CD8-positive, alpha-beta T cell (primary cell): ENCODE measurements at regions of chr12 and their contacts with region 1.

Region 1: DNA sequence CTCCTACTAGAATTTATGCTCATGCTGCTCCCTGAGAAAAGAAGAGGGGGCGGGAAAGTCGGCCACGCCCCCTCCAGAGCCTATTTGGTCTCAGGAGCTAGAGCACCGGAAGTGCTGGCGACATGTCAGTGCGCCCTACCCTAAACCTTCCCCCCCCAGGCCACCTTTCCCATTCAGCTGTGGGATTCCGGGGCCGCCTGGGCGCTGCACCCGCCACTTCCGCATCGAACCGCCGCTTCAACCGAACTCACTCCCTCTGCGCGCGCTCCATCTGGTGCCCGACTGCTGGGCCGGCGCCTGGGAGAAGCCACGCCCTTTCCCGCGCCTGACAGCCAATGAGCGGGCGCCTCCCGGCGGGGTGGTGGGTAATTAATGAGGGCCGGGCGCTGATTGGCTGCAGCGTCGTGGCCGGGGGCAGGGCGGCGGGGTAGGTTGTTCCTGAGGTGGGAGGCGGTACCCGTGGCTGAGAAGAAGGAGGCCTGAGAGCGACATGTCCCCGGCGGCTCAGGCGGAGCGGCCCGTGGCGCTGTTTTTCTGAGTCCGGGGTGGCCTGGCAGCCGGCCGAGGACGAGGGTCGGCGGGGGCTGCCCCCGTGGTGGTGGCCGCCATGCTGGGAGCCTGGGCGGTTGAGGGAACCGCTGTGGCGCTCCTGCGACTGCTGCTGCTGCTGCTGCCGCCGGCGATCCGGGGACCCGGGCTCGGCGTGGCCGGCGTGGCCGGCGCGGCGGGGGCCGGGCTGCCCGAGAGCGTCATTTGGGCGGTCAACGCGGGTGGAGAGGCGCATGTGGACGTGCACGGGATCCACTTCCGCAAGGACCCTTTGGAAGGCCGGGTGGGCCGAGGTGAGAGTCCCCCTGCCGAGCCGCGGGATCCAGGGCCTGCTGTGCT is at the start of gene MLEC:
- DNase-seq: peak; percentile 98 to 99 (median 99)
- ATAC-seq: peak; percentile 83
- H3K4me3 ChIP-seq: peak within 1 kb of the TSS; percentile 88 to 90
- H3K4me3 Mint-ChIP-seq: peak within 1 kb of the TSS; percentile 91
- H3K27ac ChIP-seq: peak within 1 kb of the TSS; percentile 80 to 95
- H3K27ac Mint-ChIP-seq: peak within 1 kb of the TSS; percentile 92
- H3K4me1 ChIP-seq: peaks cover 29% of the 10 kb centered on the region
- H3K4me1 Mint-ChIP-seq: peaks cover 39% of the 10 kb centered on the region
- H3K27me3 ChIP-seq: no peaks in the 10 kb centered on the region
- H3K27me3 Mint-ChIP-seq: no peaks in the 10 kb centered on the region
- CTCF ChIP-seq: no peak
- total RNA-seq, gene MLEC: 20.3 to 22.5 TPM

Region 2: GRCh38 chr12:120469450-120470149 is 217.3 kb before region 1 on chr12 and contains the start of gene SRSF9:
- CTCF ChIA-PET with region 1: no interaction called
- POLR2A ChIA-PET with region 1: no interaction called
- intact Hi-C with region 1: loop called in 1 of 2 experiments (anchors 1 kb)
- DNase-seq: peak; percentile 90 to 99 (median 97)
- ATAC-seq: peak; percentile 84
- H3K4me3 ChIP-seq: peak within 1 kb of the TSS; percentile 77 to 89
- H3K4me3 Mint-ChIP-seq: peak within 1 kb of the TSS; percentile 86
- H3K27ac ChIP-seq: peak within 1 kb of the TSS; percentile 70 to 82
- H3K27ac Mint-ChIP-seq: peak within 1 kb of the TSS; percentile 91
- H3K4me1 ChIP-seq: peaks cover 26% of the 10 kb centered on the region
- H3K4me1 Mint-ChIP-seq: peaks cover 40% of the 10 kb centered on the region
- H3K27me3 ChIP-seq: no peaks in the 10 kb centered on the region
- H3K27me3 Mint-ChIP-seq: no peaks in the 10 kb centered on the region
- CTCF ChIP-seq: peak; percentile 96
- total RNA-seq, gene SRSF9: 137 to 139 TPM

Region 3: GRCh38 chr12:120554678-120555077 is 132.3 kb before region 1 on chr12:
- CTCF ChIA-PET with region 1: no interaction called
- POLR2A ChIA-PET with region 1: no interaction called
- intact Hi-C with region 1: no loop called
- DNase-seq: no peak
- ATAC-seq: no peak
- H3K4me3 ChIP-seq: no peak overlapping the region
- H3K4me3 Mint-ChIP-seq: no peak overlapping the region
- H3K27ac ChIP-seq: no peak overlapping the region
- H3K27ac Mint-ChIP-seq: no peak overlapping the region
- H3K4me1 ChIP-seq: peaks cover 6% of the 10 kb centered on the region
- H3K4me1 Mint-ChIP-seq: peaks cover 21% of the 10 kb centered on the region
- H3K27me3 ChIP-seq: no peaks in the 10 kb centered on the region
- H3K27me3 Mint-ChIP-seq: no peaks in the 10 kb centered on the region
- CTCF ChIP-seq: no peak

Region 4: GRCh38 chr12:120640840-120641833 is 45.8 kb before region 1 on chr12:
- CTCF ChIA-PET with region 1: interaction called, 5 read pairs
- POLR2A ChIA-PET with region 1: no interaction called
- intact Hi-C with region 1: loop called (anchors 1 to 2 kb)
- DNase-seq: peak in 8 of 9 experiments; percentile 26 to 70 (median 60)
- ATAC-seq: peak; percentile 73
- H3K4me3 ChIP-seq: peak overlapping the region in 1 of 2 experiments; percentile 39
- H3K4me3 Mint-ChIP-seq: peak overlapping the region; percentile 80
- H3K27ac ChIP-seq: no peak overlapping the region
- H3K27ac Mint-ChIP-seq: no peak overlapping the region
- H3K4me1 ChIP-seq: peaks cover 12% of the 10 kb centered on the region
- H3K4me1 Mint-ChIP-seq: peaks cover 8% of the 10 kb centered on the region
- H3K27me3 ChIP-seq: peaks cover 13 to 23% of the 10 kb centered on the region in 2 experiments
- H3K27me3 Mint-ChIP-seq: peaks cover 48% of the 10 kb centered on the region
- CTCF ChIP-seq: no peak

Region 5: GRCh38 chr12:120662879-120663278 is 24.1 kb before region 1 on chr12:
- CTCF ChIA-PET with region 1: no interaction called
- POLR2A ChIA-PET with region 1: no interaction called
- intact Hi-C with region 1: no loop called
- DNase-seq: no peak
- ATAC-seq: no peak
- H3K4me3 ChIP-seq: no peak overlapping the region
- H3K4me3 Mint-ChIP-seq: no peak overlapping the region
- H3K27ac ChIP-seq: no peak overlapping the region
- H3K27ac Mint-ChIP-seq: no peak overlapping the region
- H3K4me1 ChIP-seq: no peaks in the 10 kb centered on the region
- H3K4me1 Mint-ChIP-seq: no peaks in the 10 kb centered on the region
- H3K27me3 ChIP-seq: peaks cover 0 to 4% of the 10 kb centered on the region in 2 experiments
- H3K27me3 Mint-ChIP-seq: peaks cover 2% of the 10 kb centered on the region
- CTCF ChIP-seq: no peak

Region 6: DNA sequence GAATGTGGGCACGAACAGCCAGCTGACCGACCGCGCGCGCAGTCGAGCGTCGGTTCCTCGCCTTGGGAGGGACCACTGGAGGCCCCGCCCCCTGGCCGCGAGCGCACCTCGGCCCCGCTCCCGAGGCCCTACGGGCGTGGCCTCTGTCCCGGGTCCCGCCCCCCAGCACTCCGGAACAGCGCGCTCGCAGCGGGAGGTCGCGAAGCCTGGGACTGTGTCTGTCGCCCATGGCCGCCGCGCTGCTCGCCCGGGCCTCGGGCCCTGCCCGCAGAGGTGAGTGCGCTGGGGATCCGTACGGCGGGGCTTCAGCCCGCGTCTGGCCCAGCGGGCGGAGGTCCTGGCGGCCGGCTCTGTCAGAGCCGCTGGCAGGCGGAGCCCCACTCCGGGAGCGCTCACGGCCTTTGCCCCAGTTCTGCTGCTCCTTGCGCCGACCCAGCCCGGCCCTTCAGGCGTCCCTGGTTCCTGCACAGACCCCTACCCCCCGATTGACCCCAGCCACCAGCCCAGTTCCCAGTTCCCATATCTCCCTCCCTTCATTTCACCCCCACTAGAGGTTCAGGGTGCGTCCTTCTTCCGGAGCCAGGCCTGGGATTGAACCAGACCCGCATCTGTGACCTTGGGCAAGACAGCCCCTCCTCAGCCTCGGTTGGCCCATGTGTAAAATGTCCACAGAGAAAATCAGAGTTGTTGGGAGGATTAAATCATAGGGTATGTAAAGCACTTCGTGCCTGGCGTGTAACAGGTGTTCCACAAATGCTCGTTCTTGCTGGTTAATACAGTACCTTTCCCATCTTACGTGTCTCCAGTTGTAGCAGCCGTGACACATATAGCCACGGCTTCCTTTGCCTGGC is 39.0 kb after region 1 on chr12 and contains the start of gene ACADS:
- CTCF ChIA-PET with region 1: no interaction called
- POLR2A ChIA-PET with region 1: interaction called, 7 read pairs
- intact Hi-C with region 1: loop called (anchors 1 kb)
- DNase-seq: peak; percentile 75 to 93 (median 89)
- ATAC-seq: peak; percentile 100
- H3K4me3 ChIP-seq: peak within 1 kb of the TSS; percentile 49 to 64
- H3K4me3 Mint-ChIP-seq: peak within 1 kb of the TSS; percentile 93
- H3K27ac ChIP-seq: peak within 1 kb of the TSS; percentile 37 to 56
- H3K27ac Mint-ChIP-seq: peak within 1 kb of the TSS; percentile 84
- H3K4me1 ChIP-seq: peaks cover 13% of the 10 kb centered on the region
- H3K4me1 Mint-ChIP-seq: peaks cover 24% of the 10 kb centered on the region
- H3K27me3 ChIP-seq: no peaks in the 10 kb centered on the region
- H3K27me3 Mint-ChIP-seq: no peaks in the 10 kb centered on the region
- CTCF ChIP-seq: no peak
- total RNA-seq, gene ACADS: 7.3 to 9.1 TPM

Region 7: DNA sequence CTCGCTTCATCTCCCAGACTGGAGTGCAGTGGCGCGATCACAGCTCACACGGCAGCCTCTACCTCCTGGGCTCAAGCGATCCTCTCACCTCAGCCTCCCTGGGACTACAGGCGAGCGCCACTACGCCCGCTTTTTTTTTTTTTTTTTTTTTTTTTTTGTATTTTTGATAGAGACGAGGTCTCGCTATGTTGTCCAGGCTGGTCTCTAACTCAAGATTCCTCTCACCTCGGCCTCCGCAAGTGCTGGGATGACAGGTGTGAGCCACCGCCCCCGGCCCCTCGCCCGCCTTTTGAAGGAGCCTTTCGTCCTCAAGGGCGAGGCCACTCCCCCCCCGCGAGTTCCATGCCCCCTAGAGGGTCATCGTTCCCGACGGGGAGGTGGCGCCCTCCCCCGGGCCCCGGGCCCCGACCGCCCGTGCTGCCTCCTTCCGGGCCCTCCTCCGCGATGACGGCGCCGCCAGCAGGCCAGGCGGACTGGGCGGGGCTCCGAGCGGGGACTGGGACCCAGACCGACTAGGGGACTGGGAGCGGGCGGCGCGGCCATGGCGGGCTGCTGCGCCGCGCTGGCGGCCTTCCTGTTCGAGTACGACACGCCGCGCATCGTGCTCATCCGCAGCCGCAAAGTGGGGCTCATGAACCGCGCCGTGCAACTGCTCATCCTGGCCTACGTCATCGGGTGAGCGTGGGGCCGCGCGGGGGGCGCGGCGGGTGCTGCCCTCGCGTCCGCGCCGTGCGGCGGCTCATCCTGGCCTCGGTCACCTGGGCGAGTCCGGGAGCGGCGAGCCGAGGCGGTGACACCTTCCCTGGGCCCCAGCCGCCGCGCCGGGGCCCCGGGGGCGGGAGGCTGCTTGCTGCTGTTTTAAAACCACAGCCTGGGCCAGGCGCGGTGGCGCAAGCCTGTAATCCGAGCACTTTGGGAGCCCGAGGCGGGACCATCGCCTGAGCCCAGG is 523.0 kb after region 1 on chr12 and contains the start of gene P2RX4:
- CTCF ChIA-PET with region 1: no interaction called
- POLR2A ChIA-PET with region 1: no interaction called
- intact Hi-C with region 1: loop called in 1 of 2 experiments (anchors 5 kb)
- DNase-seq: peak; percentile 72 to 96 (median 88)
- ATAC-seq: peak; percentile 86
- H3K4me3 ChIP-seq: peak within 1 kb of the TSS; percentile 60 to 66
- H3K4me3 Mint-ChIP-seq: peak within 1 kb of the TSS; percentile 78
- H3K27ac ChIP-seq: peak within 1 kb of the TSS; percentile 85 to 86
- H3K27ac Mint-ChIP-seq: peak within 1 kb of the TSS; percentile 92
- H3K4me1 ChIP-seq: peaks cover 16% of the 10 kb centered on the region
- H3K4me1 Mint-ChIP-seq: peaks cover 24% of the 10 kb centered on the region
- H3K27me3 ChIP-seq: no peaks in the 10 kb centered on the region
- H3K27me3 Mint-ChIP-seq: no peaks in the 10 kb centered on the region
- CTCF ChIP-seq: no peak
- total RNA-seq, gene P2RX4: 27.5 to 29.8 TPM

Region 8: DNA sequence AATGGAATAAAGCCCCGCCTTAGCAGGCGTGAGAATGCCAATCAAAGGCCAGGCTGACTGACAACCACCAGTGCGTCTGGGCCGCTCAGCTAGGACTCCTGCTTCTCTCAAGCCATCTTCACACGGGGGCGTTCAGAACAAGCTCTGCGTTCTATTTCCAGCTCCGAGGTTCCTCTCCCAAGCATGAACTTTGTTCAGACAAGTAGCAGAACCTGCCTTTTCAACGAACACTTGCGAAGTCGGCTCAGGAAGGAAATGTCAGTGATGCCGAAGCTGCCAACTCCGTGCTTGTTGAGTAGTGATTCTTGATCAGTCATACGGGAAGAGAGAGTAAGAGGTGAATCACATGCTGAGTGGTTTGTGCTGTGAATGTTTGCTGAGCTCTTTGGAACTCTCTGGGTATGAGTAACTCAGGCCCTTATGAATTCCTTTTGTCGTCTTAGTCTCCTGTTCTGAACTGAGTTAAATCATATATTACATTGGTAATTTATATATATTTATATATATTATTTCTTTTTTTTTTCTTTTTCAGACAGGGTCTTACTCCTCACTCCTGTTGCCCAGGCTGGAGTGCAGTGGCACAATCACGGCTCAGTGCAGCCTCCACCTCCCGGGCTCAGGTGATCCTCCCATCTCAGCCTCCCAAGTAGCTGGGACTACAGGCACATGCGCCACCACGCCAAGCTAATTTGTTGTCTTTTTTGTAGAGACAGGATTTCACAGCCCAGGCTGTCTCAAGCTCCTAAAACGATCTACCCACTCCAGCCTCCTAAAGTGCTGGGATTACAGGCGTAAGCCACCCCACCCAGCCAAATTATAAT is 1305.3 kb after region 1 on chr12:
- CTCF ChIA-PET with region 1: no interaction called
- POLR2A ChIA-PET with region 1: no interaction called
- intact Hi-C with region 1: no loop called
- DNase-seq: peak in 8 of 9 experiments; percentile 15 to 51 (median 30)
- ATAC-seq: peak; percentile 84
- H3K4me3 ChIP-seq: no peak overlapping the region
- H3K4me3 Mint-ChIP-seq: peak overlapping the region; percentile 45
- H3K27ac ChIP-seq: no peak overlapping the region
- H3K27ac Mint-ChIP-seq: no peak overlapping the region
- H3K4me1 ChIP-seq: no peaks in the 10 kb centered on the region
- H3K4me1 Mint-ChIP-seq: peaks cover 7% of the 10 kb centered on the region
- H3K27me3 ChIP-seq: no peaks in the 10 kb centered on the region
- H3K27me3 Mint-ChIP-seq: peaks cover 2% of the 10 kb centered on the region
- CTCF ChIP-seq: no peak

Region 9: GRCh38 chr12:122526683-122527477 is 1839.9 kb after region 1 on chr12 and contains the starts of genes KNTC1 and RSRC2:
- CTCF ChIA-PET with region 1: no interaction called
- POLR2A ChIA-PET with region 1: no interaction called
- intact Hi-C with region 1: loop called in 1 of 2 experiments (anchors 2 kb)
- DNase-seq: peak; percentile 94 to 100 (median 96)
- ATAC-seq: peak; percentile 94
- H3K4me3 ChIP-seq: peak within 1 kb of the TSS; percentile 70 to 72
- H3K4me3 Mint-ChIP-seq: no peak within 1 kb of the TSS
- H3K27ac ChIP-seq: peak within 1 kb of the TSS; percentile 96 to 99
- H3K27ac Mint-ChIP-seq: peak within 1 kb of the TSS; percentile 15
- H3K4me1 ChIP-seq: peaks cover 35% of the 10 kb centered on the region
- H3K4me1 Mint-ChIP-seq: peaks cover 34% of the 10 kb centered on the region
- H3K27me3 ChIP-seq: no peaks in the 10 kb centered on the region
- H3K27me3 Mint-ChIP-seq: no peaks in the 10 kb centered on the region
- CTCF ChIP-seq: no peak
- total RNA-seq, gene KNTC1: 14.1 to 15.1 TPM
- total RNA-seq, gene RSRC2: 325 to 333 TPM